HEK293 (cell line): ENCODE measurements at regions of chr18 and their contacts with region 1.

Region 1: GRCh38 chr18:11733031-11733430 is 44.0 kb downstream of the GNAL start:
- H3K4me3 ChIP-seq: no peak overlapping the region; the same call in 1 of the 2 replicates
- H3K27ac ChIP-seq: no peak overlapping the region
- H3K4me1 ChIP-seq: no peaks in the 10 kb centered on the region
- CTCF ChIP-seq: peak; percentile 91

Region 2: DNA sequence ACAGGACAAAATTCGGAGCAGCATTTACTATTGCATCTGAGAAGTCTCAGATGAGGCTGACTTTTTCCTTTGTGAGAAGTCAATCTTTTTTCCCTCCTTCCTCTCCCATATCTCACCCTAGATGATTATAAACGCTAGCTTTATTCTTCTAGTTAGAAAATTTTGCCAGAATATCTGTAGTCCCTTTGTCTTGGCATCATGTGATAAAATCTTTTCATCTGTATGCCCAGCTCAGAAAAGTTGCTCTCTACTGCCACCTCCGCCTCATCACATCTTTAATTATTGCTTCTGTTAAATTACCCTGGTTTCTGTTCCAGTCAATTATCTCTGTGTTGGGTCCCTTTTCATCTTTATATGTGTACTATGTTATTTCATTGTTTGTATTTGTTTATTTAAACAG is 334.4 kb before region 1 on chr18:
- CTCF ChIA-PET with region 1: no interaction called
- POLR2A ChIA-PET with region 1: no interaction called
- H3K4me3 ChIP-seq: no peak overlapping the region
- H3K27ac ChIP-seq: no peak overlapping the region
- H3K4me1 ChIP-seq: peaks cover 3% of the 10 kb centered on the region; the same call in 1 of the 2 replicates
- CTCF ChIP-seq: 0 out of 2 replicates have a peak, but pooled peaks have one; percentile 13

Region 3: DNA sequence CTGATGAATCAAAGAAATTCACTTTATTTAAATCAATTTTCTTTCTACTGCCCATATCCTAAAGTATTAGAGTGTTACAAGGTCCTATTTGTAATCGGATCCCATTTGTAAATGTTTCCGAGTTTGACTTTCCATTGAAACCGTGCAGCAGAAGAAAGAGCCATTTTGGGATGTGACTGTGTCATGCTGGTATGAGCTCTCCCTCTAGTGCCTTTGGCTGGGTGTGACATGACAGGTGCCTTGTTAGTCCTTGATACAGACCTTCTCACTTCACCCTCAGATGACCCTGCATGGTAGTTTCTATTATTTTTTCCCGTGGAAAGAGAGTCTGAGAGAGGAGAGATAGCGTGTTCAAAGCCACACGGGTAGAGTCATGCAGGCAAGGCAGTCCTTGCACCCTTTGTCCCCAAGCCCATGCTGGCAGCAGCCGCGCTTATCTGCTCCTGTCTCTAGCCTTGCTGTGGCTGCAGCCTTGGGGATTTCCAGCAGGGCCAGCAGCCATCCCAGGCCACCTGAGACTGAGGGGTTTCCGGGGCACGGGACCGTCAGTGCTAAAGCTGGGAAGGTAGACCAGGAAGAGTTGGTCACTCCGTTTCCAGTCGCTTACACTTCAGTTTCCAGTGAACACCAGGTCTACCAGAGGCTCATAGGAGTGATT is 139.6 kb after region 1 on chr18:
- CTCF ChIA-PET with region 1: interaction called, 27 read pairs
- POLR2A ChIA-PET with region 1: no interaction called
- H3K4me3 ChIP-seq: no peak overlapping the region
- H3K27ac ChIP-seq: no peak overlapping the region
- H3K4me1 ChIP-seq: no peaks in the 10 kb centered on the region
- CTCF ChIP-seq: peak; percentile 61

Region 4: DNA sequence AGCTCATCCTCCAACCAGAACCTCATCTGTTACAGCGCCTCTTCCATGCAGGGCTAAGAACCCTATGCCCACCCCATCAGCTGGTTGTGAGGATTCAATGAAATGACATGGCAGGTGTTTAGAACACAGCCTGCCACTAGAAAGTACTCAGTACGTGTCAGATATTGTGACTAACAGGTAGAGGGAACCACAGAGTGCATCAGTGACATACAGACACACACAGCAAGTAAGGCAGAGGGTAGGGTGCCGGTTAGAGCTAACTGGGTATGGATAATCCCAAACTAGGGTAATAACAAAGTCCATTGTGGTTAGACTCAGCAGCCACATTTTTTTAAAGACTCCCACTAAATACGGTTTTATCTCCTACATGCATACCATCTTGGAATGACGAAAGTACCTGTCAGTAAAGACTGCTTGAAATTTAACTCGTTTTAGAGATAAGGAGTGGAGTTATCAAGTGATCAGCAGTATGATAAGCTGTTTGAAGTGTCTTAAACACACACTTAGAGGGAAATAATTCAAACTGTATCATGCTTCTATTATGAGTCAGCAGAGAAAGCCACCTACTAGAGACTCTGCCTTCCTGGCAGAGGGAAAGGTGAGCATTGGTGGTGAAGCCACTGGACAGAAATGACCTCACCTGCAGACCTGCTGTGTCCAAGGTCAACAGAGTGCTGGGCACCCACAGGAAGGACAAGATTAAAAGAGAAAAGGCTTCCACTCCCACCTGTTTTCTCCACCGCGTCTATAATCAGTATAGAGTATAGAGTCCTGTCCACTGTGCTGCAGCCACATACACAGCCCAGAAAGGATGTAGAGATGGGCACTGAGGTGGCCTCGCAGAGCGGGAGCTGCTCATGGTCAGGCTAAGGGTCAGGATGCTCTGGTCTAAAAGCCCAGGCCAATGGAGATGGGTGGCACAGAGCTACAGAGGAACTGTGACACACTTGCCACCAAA is 154.6 kb after region 1 on chr18:
- CTCF ChIA-PET with region 1: interaction called, 10 read pairs
- POLR2A ChIA-PET with region 1: no interaction called
- H3K4me3 ChIP-seq: no peak overlapping the region
- H3K27ac ChIP-seq: no peak overlapping the region
- H3K4me1 ChIP-seq: 0 out of 2 replicates have a peak, but pooled peaks cover 3% of the 10 kb centered on the region
- CTCF ChIP-seq: no peak

Region 5: GRCh38 chr18:12038639-12039417 is 305.8 kb after region 1 on chr18:
- CTCF ChIA-PET with region 1: interaction called, 34 read pairs
- POLR2A ChIA-PET with region 1: no interaction called
- H3K4me3 ChIP-seq: peak overlapping the region; percentile 52
- H3K27ac ChIP-seq: no peak overlapping the region; the same call in 1 of the 2 replicates
- H3K4me1 ChIP-seq: no peaks in the 10 kb centered on the region; the same call in 1 of the 2 replicates
- CTCF ChIP-seq: peak; percentile 99